Right cardiac atrium (tissue), 5 donors: ENCODE measurements at regions of chr1 and their contacts with region 1.

Region 1: GRCh38 chr1:99557546-99558202 is 88.2 kb upstream of the PALMD start:
- DNase-seq: no peak
- ATAC-seq: no peak
- H3K4me3 ChIP-seq: no peak overlapping the region
- H3K27ac ChIP-seq: no peak overlapping the region
- H3K4me1 ChIP-seq: no peaks in the 10 kb centered on the region
- H3K27me3 ChIP-seq: no peaks in the 10 kb centered on the region

Region 2: GRCh38 chr1:99634971-99635624 is 77.4 kb after region 1 on chr1:
- intact Hi-C with region 1: loop called in 1 of 4 experiments (anchors 10 kb)
- DNase-seq: no peak
- ATAC-seq: no peak
- H3K4me3 ChIP-seq: no peak overlapping the region
- H3K27ac ChIP-seq: no peak overlapping the region
- H3K4me1 ChIP-seq: no peaks in the 10 kb centered on the region
- H3K27me3 ChIP-seq: no peaks in the 10 kb centered on the region